CD8-positive, alpha-beta T cell (primary cell): ENCODE measurements at regions of chr14 and their contacts with region 1.

Region 1: GRCh38 chr14:31456841-31457664 is at the start of gene DTD2:
- DNase-seq: peak; percentile 87 to 95 (median 92)
- ATAC-seq: peak; percentile 98
- H3K4me3 ChIP-seq: peak within 1 kb of the TSS; percentile 93 to 95
- H3K4me3 Mint-ChIP-seq: peak within 1 kb of the TSS; percentile 96
- H3K27ac ChIP-seq: peak within 1 kb of the TSS; percentile 78 to 85
- H3K27ac Mint-ChIP-seq: peak within 1 kb of the TSS; percentile 92
- H3K4me1 ChIP-seq: peaks cover 15% of the 10 kb centered on the region
- H3K4me1 Mint-ChIP-seq: peaks cover 42% of the 10 kb centered on the region
- H3K27me3 ChIP-seq: no peaks in the 10 kb centered on the region
- H3K27me3 Mint-ChIP-seq: peaks cover 2% of the 10 kb centered on the region
- CTCF ChIP-seq: no peak
- total RNA-seq, gene DTD2: 4.9 to 6.5 TPM

Region 2: DNA sequence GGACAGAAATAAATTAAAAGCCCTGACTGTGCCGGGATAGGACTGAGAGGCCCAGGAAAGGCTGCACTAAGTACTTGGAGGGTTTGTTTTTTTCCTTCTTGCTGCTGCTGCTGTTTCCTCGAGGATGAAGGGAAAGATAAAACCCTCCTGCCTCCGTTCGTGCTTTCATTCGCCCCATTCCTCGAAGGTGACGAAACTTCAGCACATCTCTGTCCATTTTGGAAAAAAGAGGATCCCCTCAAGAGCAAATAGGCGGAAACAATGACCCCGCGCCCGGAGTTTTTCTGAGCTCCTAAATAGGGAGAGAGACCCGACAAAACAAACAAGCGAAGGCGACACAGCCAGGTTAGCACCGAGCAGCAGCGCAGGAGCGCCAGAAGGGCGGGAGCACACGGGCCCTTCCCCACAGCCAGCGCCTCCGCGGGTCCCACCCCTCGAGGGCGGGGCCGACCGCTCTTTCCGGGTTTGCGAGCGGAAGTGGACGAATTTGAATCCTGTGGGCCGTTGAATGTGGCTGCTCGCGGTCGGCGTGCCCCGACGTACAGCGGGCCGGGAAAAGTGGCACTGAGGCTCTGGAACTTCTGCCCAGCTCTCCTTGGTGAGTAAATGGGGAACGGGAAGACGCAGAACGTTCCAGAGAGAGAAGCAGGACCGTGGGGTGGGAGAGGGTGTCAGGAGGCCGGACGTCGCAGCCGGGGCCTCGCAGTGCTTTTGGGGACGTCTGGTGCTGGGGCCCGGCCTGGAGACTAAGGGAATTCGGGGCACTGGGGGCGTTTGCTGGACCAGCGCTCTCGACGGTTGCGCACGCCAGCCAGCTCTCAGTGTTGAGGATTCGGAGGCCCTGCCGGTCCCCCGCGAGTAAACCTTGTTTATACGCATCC is 898.1 kb before region 1 on chr14 and contains the start of gene G2E3:
- CTCF ChIA-PET with region 1: no interaction called
- POLR2A ChIA-PET with region 1: no interaction called
- intact Hi-C with region 1: loop called in 1 of 2 experiments (anchors 2 kb)
- DNase-seq: peak; percentile 73 to 92 (median 84)
- ATAC-seq: peak; percentile 99
- H3K4me3 ChIP-seq: peak within 1 kb of the TSS; percentile 91 to 96
- H3K4me3 Mint-ChIP-seq: peak within 1 kb of the TSS; percentile 99
- H3K27ac ChIP-seq: peak within 1 kb of the TSS; percentile 83 to 86
- H3K27ac Mint-ChIP-seq: peak within 1 kb of the TSS; percentile 98
- H3K4me1 ChIP-seq: peaks cover 24% of the 10 kb centered on the region
- H3K4me1 Mint-ChIP-seq: peaks cover 37% of the 10 kb centered on the region
- H3K27me3 ChIP-seq: no peaks in the 10 kb centered on the region
- H3K27me3 Mint-ChIP-seq: no peaks in the 10 kb centered on the region
- CTCF ChIP-seq: no peak
- total RNA-seq, gene G2E3: 25.2 to 34.7 TPM

Region 3: DNA sequence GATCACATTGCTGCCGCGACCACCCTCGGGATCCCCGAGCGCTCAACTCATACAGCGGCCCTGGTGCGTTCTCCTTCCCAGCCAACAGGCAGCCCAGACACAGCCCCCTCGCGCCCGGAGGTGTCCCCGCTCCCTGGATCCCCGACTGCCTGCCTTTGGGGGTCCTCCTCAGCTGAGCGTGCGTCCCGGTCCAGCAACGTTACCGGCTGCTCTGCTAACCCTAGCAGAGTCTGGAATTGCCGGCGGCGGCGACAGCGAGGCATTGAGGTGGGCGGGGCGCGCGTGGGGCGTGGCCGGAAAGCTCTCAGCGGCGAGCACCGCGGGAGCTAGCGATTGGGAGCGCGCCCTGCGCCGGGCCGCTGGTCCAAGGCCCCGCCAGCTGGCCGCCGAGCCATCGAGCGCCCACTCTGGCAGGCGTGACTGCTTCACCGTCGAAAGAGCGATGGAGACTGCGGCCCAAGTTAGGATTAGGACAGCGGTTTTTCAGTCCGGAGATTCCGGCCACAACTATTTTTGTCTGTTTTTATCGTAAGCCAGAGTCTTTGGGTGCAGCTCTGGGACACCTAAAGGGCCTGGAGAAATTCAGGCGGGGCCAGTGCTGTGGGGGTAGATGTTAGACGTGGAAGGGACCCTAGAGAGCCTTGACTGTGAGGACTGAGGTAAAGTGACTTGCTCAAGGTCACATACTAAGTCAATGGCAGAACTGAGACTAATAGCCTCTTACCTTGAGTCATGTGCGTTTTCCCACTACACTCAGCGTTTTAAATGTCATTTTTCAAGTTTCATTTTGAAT is 36.5 kb before region 1 on chr14 and contains the start of gene HEATR5A:
- CTCF ChIA-PET with region 1: interaction called, 11 read pairs
- POLR2A ChIA-PET with region 1: interaction called, 19 read pairs
- intact Hi-C with region 1: loop called (anchors 1 kb)
- DNase-seq: peak; percentile 87 to 95 (median 93)
- ATAC-seq: peak; percentile 97
- H3K4me3 ChIP-seq: peak within 1 kb of the TSS; percentile 76 to 96
- H3K4me3 Mint-ChIP-seq: peak within 1 kb of the TSS; percentile 97
- H3K27ac ChIP-seq: peak within 1 kb of the TSS; percentile 63 to 71
- H3K27ac Mint-ChIP-seq: peak within 1 kb of the TSS; percentile 91
- H3K4me1 ChIP-seq: peaks cover 13% of the 10 kb centered on the region
- H3K4me1 Mint-ChIP-seq: peaks cover 25% of the 10 kb centered on the region
- H3K27me3 ChIP-seq: no peaks in the 10 kb centered on the region
- H3K27me3 Mint-ChIP-seq: no peaks in the 10 kb centered on the region
- CTCF ChIP-seq: no peak
- total RNA-seq, gene HEATR5A: 3.4 to 3.5 TPM

Region 4: DNA sequence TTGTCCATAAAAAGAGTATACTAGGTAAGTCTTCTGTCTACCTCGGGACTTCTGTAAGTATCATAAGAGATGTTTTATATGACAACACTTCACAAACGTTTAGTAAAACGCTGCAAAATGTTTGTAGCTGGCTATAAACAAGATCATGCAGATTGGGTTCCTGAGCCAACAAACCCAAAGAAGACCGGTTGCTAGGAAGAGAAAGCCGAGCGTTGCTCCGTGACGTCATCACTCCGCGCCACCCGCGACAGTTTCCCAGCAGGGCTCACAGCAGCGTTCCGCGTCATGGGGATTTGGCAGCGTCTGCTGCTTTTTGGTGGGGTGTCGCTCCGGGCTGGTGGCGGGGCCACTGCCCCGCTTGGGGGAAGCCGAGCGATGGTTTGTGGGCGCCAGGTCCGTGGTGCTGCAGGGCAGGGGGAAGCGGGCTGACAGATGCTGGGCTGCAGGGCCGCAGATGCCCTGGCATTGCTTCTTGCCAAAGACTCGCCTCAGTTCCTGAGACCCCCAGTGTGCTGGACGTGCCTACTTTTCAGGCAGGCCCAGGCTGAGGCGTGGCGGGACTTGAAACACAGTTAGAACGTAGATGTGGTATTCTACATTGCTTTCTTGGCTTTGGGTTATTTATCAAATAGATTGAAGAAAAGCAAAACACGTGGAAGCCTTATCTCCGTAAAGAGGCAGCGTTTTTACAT is 104.2 kb after region 1 on chr14 and contains the start of gene NUBPL:
- CTCF ChIA-PET with region 1: no interaction called
- POLR2A ChIA-PET with region 1: no interaction called
- intact Hi-C with region 1: loop called (anchors 1 kb)
- DNase-seq: peak; percentile 95 to 99 (median 98)
- ATAC-seq: peak; percentile 95
- H3K4me3 ChIP-seq: peak within 1 kb of the TSS; percentile 75 to 86
- H3K4me3 Mint-ChIP-seq: peak within 1 kb of the TSS; percentile 96
- H3K27ac ChIP-seq: peak within 1 kb of the TSS; percentile 82 to 86
- H3K27ac Mint-ChIP-seq: peak within 1 kb of the TSS; percentile 98
- H3K4me1 ChIP-seq: peaks cover 18% of the 10 kb centered on the region
- H3K4me1 Mint-ChIP-seq: peaks cover 35% of the 10 kb centered on the region
- H3K27me3 ChIP-seq: no peaks in the 10 kb centered on the region
- H3K27me3 Mint-ChIP-seq: peaks cover 4% of the 10 kb centered on the region
- CTCF ChIP-seq: no peak
- total RNA-seq, gene NUBPL: 4.7 to 7.5 TPM